ENCODE measurements at regions of chr20 and their contacts with region 1.

Region 1: GRCh38 chr20:32497589-32498224 is 87.4 kb downstream of the NOL4L start:
- DNase-seq: no peak
- CTCF ChIP-seq: no peak

Region 2: DNA sequence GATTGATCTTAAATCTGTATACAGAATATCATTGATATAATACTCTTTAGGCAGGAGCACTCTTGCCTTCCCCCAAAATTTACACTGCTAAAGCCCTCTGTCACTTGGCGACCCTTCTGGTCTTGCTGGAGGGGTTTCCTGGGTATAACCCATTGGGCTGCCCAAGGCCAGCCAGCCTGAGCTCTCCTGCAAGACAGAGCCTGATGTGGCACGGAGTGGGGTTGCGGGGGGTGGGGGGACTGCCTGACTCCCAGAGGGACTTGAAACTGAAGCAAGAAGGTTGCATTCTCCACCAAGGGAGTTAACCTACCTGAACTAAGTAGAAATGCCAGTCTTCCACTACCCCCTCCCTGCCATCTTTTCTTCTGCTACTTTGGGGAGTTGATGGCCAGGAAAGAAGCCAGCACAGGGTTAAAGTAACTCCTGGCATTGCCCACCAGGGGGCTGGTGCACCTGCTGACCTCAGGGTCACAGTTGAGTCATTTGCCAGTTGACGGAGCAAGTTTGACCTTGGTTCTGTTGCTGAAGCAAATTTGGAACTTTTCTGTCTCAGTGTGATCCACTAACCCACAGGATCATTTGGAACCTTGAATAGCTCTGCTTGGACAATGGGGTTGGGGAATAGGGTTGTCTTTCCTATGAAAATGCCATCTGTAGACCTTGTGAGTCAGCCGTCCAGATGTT is 60.2 kb before region 1 on chr20:
- CTCF ChIA-PET with region 1: no interaction called
- POLR2A ChIA-PET with region 1: no interaction called
- DNase-seq: no peak
- CTCF ChIP-seq: no peak

Region 3: DNA sequence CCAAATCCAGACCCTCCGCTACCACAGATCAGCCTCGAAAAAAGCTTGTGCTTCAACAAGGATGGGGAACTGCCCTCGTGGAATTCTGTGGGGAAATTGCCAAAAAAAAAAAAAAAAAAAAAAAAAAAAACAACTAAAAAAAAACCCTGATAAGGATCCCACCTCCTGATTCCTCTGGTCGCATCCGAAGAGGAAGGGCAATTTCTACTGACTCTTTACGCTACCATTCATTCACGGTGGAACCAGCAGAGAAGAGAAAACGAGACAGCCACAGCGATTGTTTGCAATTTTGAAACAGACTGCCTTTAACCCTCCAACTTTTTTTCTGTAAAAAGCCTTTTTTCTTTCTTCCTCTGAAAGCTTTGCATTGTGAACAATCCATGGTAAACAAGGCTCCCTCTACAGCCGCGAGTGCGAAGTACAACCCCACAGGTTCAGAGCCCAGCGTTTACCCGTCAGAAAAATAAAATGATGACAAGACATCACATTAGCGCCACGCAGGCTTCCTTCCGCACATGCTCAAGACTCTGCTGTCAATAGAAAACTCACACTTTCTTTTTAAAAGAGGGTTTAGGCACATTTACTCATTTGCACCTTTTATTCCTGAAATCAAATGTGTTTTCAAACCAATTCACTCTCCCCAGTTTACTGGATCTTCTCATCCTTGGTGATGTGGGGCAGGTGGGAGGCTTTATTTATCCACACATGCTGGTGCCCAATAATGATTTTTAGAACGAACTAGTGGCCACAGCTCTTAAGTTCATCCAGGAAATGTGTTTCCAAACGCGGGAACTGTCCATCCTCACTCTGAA is 12.5 kb before region 1 on chr20:
- CTCF ChIA-PET with region 1: interaction called, 13 read pairs
- POLR2A ChIA-PET with region 1: no interaction called
- DNase-seq: peak; percentile 75
- CTCF ChIP-seq: peak; percentile 77

Region 4: DNA sequence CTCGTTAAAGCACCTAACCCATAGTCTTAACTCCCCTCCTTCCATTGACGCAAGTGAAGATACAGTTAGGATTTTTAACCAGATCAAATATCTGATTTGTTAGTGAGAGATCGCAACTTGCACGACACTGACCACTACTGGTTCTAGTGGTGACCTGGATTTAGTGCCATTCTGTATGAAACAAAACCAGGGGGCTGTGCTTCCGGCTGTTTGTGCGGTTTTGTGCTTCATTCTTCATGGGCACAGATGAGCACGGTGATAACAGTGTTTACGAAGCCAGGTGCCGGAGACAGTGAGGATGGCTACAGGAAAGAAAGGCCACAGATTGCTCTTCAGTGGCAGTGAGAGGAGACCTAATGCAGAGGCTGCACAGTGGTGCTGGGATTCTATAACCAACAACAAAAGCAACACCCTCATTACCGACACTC is 11.9 kb after region 1 on chr20:
- CTCF ChIA-PET with region 1: interaction called, 21 read pairs
- POLR2A ChIA-PET with region 1: no interaction called
- DNase-seq: no peak
- CTCF ChIP-seq: peak; percentile 18